ENCODE measurements at regions of chr1 and their contacts with region 1.

Region 1: GRCh38 chr1:24822887-24823286 is 77.6 kb downstream of the CLIC4 start:
- DNase-seq: no peak
- ATAC-seq: no peak
- H3K4me3 ChIP-seq: no peak overlapping the region
- H3K27ac ChIP-seq: no peak overlapping the region
- H3K4me1 ChIP-seq: no peaks in the 10 kb centered on the region
- H3K27me3 ChIP-seq: no peaks in the 10 kb centered on the region
- CTCF ChIP-seq: no peak

Region 2: GRCh38 chr1:23889074-23889473 is 933.8 kb before region 1 on chr1:
- intact Hi-C with region 1: no loop called
- DNase-seq: no peak
- ATAC-seq: no peak
- H3K4me3 ChIP-seq: no peak overlapping the region
- H3K27ac ChIP-seq: no peak overlapping the region
- H3K4me1 ChIP-seq: no peaks in the 10 kb centered on the region
- H3K27me3 ChIP-seq: no peaks in the 10 kb centered on the region
- CTCF ChIP-seq: no peak

Region 3: DNA sequence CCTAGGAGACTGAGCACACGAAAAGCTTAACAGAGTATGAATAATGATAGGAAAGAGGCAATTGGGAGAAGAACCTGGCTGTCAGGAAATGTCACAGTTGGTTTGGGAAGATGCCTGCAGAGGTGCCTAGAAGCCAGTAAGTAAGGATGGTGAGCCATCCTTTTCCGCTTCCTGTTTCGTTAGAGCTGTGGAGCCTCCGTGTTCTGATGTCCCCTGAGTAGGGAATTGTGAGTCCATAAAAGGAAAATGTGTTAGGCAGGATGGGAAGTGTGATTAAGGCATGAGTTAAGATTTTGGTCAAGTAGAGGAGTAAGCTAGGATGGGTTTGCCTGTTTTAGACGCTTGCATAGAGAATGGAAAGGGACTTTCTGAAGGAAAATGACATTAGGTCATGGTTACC is 68.7 kb before region 1 on chr1:
- intact Hi-C with region 1: loop called in 1 of 3 experiments (anchors 10 kb)
- DNase-seq: no peak
- ATAC-seq: no peak
- H3K4me3 ChIP-seq: no peak overlapping the region
- H3K27ac ChIP-seq: no peak overlapping the region
- H3K4me1 ChIP-seq: peaks cover 0 to 8% (median 0%) of the 10 kb centered on the region in 3 donors
- H3K27me3 ChIP-seq: no peaks in the 10 kb centered on the region
- CTCF ChIP-seq: no peak